ENCODE measurements at regions of chr16 and their contacts with region 1.

Region 1: DNA sequence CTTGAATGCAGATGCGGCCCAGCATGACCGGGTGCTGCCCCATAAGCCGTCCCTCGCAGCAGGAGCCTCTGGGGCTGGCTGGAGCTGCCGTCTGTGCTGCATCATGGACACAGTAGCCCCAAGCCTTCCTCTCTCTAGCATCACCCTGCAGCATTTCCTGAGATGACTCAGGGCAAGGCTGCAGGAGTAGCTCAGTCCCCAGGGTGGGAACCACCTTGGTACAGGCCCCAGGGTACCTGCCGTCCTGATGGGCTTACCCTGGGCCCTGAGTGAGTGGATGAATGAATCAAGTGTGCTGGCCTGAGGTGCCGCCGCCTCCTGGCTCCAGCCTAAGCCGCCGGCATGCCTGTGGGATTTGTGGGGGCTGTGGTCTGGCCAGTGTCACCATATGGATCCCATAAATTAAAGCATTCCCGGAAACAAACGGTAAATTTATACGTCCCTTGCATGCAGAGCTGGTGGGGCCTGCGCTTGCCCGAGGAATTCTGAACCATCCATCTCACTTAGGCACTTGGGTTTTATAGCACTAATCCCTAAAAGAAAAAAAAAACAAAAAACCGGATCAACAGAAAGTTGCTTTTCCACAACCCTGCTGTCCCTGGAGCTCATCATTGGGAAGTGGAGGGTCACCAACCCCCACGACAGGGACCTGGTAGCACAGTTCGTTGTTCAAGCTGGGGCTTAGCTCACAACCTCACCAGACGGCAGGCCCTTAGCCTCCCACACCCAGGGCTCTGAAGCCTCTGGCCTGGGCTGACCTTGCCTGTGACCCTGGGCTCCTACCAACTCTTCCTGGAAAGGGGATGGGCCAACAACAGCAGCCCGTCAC is 242.6 kb upstream of the CIBAR2 start:
- DNase-seq: no peak
- H3K4me3 ChIP-seq: no peak overlapping the region
- H3K27ac ChIP-seq: peak overlapping the region in 3 of 4 donors; percentile 74 to 80 (median 76)
- H3K4me1 ChIP-seq: peaks cover 0 to 78% (median 70%) of the 10 kb centered on the region in 4 donors
- H3K27me3 ChIP-seq: no peaks in the 10 kb centered on the region
- CTCF ChIP-seq: no peak
- EP300 ChIP-seq: no peak
- POLR2A ChIP-seq: no peak

Region 2: GRCh38 chr16:85010931-85011845 is 343.7 kb before region 1 on chr16 and contains the start of gene ZDHHC7:
- intact Hi-C with region 1: no loop called
- DNase-seq: peak; percentile 95
- H3K4me3 ChIP-seq: peak within 1 kb of the TSS; percentile 78 to 89 (median 84)
- H3K27ac ChIP-seq: peak within 1 kb of the TSS; percentile 92 to 95 (median 94)
- H3K4me1 ChIP-seq: peaks cover 0 to 50% (median 48%) of the 10 kb centered on the region in 4 donors
- H3K27me3 ChIP-seq: no peaks in the 10 kb centered on the region
- CTCF ChIP-seq: no peak
- EP300 ChIP-seq: peak in 1 of 4 donors; percentile 35
- POLR2A ChIP-seq: peak; percentile 92 to 96
- total RNA-seq, gene ZDHHC7: 56.2 to 69.5 (median 63.7) TPM

Region 3: DNA sequence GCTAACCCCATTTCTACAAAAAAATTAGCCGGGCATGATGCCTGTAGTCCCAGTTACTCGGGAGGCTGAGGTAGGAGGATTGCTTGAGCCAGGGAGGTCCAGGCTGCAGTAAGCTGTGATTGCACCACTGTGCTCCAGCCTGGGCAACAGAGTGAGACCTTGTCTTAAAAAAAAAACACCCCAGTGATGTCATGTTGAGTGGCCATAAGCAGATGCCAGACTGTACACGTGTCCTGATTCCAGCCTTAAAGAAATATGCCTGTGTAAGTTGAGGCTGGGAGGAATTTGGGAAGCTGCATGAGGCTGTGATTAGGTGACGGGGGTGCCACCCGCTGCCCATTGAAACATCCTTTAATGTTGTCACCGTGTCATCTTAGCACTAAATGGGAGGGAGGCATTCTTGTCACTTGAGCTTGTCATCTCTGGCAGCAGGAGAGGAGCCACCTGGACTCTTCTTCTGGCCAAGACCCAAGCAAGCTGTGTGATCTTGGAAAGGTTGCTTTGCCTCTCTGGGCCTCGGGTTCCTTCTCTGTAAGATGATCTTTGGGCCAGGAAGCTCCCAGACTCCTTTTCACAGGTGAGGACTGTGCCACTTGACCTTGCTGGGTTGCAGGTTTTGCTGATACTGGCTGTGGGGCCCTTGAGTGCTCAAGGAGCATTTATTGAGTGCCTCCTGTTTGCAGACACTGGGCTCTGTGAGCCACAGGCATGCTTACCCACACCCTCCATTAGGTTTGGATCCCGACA is 144.3 kb before region 1 on chr16:
- intact Hi-C with region 1: no loop called
- DNase-seq: no peak
- H3K4me3 ChIP-seq: no peak overlapping the region
- H3K27ac ChIP-seq: peak overlapping the region in 3 of 4 donors; percentile 45 to 90 (median 67)
- H3K4me1 ChIP-seq: peaks cover 0 to 85% (median 79%) of the 10 kb centered on the region in 4 donors
- H3K27me3 ChIP-seq: no peaks in the 10 kb centered on the region
- CTCF ChIP-seq: no peak
- EP300 ChIP-seq: no peak
- POLR2A ChIP-seq: no peak

Region 4: GRCh38 chr16:85321509-85322271 is 33.2 kb before region 1 on chr16:
- intact Hi-C with region 1: loop called (anchors 5 kb)
- DNase-seq: peak; percentile 97
- H3K4me3 ChIP-seq: peak overlapping the region in 2 of 4 donors; percentile 8 to 13
- H3K27ac ChIP-seq: peak overlapping the region; percentile 70 to 80 (median 77)
- H3K4me1 ChIP-seq: peaks cover 0 to 35% (median 28%) of the 10 kb centered on the region in 4 donors
- H3K27me3 ChIP-seq: no peaks in the 10 kb centered on the region
- CTCF ChIP-seq: no peak
- EP300 ChIP-seq: no peak
- POLR2A ChIP-seq: no peak

Region 5: DNA sequence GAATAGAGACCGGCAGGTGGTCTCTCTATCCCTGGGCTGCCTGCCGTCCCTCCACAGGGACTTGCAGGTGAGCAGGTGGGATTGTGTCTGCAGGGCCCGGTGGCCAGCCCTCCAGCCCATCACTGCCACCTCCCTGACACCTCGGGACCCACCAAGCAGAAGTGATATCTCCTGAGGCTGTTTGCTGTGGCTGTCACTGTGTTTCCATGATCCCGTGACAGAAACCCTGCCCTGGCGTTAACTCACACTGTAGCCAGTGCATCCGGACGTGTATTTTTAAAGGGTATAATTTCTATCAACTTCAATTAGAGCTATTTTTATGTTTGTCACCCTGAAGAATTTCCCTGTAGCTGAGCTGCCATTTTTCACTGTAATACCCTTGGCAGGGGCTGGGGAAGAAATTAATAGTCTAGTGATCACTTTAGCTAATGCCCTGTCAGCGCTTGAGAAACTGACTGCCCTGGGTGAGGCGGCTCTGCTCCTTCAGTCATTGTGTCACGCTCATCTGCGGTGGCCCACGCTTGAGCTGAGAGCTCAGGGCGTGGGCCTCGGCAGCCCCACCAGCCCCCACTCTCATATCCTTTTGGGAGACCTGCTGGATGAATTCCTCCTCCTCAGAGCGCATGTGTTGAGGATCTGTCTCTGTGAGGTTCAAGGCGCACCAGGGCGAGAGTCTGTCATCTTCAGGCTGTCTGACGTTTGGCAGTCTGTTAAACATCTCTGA is 12.8 kb before region 1 on chr16:
- intact Hi-C with region 1: no loop called
- DNase-seq: no peak
- H3K4me3 ChIP-seq: no peak overlapping the region
- H3K27ac ChIP-seq: no peak overlapping the region
- H3K4me1 ChIP-seq: no peaks in the 10 kb centered on the region
- H3K27me3 ChIP-seq: no peaks in the 10 kb centered on the region
- CTCF ChIP-seq: no peak
- EP300 ChIP-seq: no peak
- POLR2A ChIP-seq: no peak